ENCODE measurements at regions of chr2 and their contacts with region 1.

Region 1: GRCh38 chr2:239953418-239954061 is 71.6 kb downstream of the NDUFA10 start:
- DNase-seq: peak; percentile 93
- H3K4me3 ChIP-seq: peak overlapping the region in 2 of 4 donors; percentile 0 to 29
- H3K27ac ChIP-seq: peak overlapping the region; percentile 83 to 91 (median 87)
- H3K4me1 ChIP-seq: peaks cover 0 to 56% (median 51%) of the 10 kb centered on the region in 4 donors
- H3K27me3 ChIP-seq: no peaks in the 10 kb centered on the region
- CTCF ChIP-seq: no peak
- EP300 ChIP-seq: peak in 2 of 4 donors; percentile 71 to 86
- POLR2A ChIP-seq: peak; percentile 15 to 20

Region 2: GRCh38 chr2:239339726-239340601 is 613.6 kb before region 1 on chr2:
- intact Hi-C with region 1: loop called (anchors 10 kb)
- DNase-seq: peak; percentile 64
- H3K4me3 ChIP-seq: no peak overlapping the region
- H3K27ac ChIP-seq: peak overlapping the region; percentile 56 to 97 (median 96)
- H3K4me1 ChIP-seq: peaks cover 0 to 70% (median 60%) of the 10 kb centered on the region in 4 donors
- H3K27me3 ChIP-seq: no peaks in the 10 kb centered on the region
- CTCF ChIP-seq: no peak
- EP300 ChIP-seq: no peak
- POLR2A ChIP-seq: no peak

Measured in sigmoid colon (tissue), 7 donors.